AG04449 (cell line): ENCODE measurements at regions of chr5 and their contacts with region 1.

Region 1: GRCh38 chr5:32489791-32490582 is 45.4 kb upstream of the ZFR start:
- DNase-seq: no peak
- H3K4me3 ChIP-seq: no peak overlapping the region; the same call in 1 of the 2 replicates
- CTCF ChIP-seq: peak; percentile 65

Region 2: GRCh38 chr5:32462618-32463017 is 27.4 kb before region 1 on chr5:
- CTCF ChIA-PET with region 1: interaction called, 29 read pairs
- POLR2A ChIA-PET with region 1: no interaction called
- DNase-seq: no peak
- H3K4me3 ChIP-seq: no peak overlapping the region
- CTCF ChIP-seq: no peak

Region 3: DNA sequence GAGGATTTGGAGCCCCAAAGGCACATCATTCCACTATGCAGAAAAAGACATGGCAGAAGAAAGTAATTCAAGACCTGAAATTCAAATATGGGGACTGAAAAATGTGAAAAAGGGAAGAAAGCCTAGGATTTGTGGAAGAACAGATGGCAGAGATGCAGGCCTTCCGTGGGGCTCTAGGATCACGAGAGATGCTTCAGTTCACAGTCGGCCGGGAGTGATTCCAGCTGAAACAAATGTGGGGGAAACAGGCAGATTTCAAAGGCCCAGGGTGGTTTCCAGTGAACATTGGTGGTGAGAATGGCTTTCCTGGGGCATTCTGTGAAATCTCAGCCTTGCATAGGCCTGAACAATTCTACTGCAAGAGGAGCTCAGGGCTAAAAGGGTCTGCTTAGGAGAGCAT is 10.9 kb before region 1 on chr5:
- CTCF ChIA-PET with region 1: interaction called, 53 read pairs
- POLR2A ChIA-PET with region 1: no interaction called
- DNase-seq: no peak
- H3K4me3 ChIP-seq: no peak overlapping the region
- CTCF ChIP-seq: no peak

Region 4: GRCh38 chr5:32531885-32532520 is 42.0 kb after region 1 on chr5:
- CTCF ChIA-PET with region 1: interaction called, 16 read pairs
- POLR2A ChIA-PET with region 1: no interaction called
- DNase-seq: no peak
- H3K4me3 ChIP-seq: peak overlapping the region; percentile 40
- CTCF ChIP-seq: no peak

Region 5: GRCh38 chr5:32600057-32600622 is 110.2 kb after region 1 on chr5:
- CTCF ChIA-PET with region 1: interaction called, 449 read pairs
- POLR2A ChIA-PET with region 1: no interaction called
- DNase-seq: peak; percentile 41
- H3K4me3 ChIP-seq: no peak overlapping the region
- CTCF ChIP-seq: no peak